ENCODE measurements at regions of chr15 and their contacts with region 1.

Region 1: GRCh38 chr15:80934761-80935221 is 54.8 kb downstream of the MESD start:
- DNase-seq: no peak

Region 2: DNA sequence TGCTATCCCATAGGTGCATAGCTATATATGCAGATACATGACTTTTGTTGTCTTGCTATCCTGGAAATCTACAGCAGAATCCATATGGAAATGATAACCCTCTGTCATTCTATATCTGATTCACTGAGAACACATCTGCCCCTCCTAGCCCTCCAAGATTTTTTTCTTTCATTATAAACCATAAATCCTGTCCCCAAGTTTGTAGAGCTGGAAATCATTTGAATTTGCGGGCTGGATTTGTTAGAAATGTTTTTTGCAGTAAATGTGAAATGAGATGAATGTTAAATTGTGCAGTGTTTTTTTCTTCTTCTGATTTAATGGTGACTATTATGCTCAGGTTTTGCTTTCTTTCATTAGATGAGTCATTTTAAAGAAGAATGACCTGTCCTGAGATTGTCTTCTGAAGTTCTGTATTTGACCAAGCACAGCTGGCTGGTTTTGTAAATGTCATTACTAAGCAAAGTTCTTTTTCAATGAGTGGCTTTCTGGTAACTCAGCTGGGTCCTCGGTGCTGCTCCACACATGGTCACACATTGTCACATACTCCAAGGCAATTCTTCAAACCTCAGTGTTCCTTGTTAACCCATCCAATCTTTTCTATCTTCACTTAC is 265.0 kb before region 1 on chr15:
- intact Hi-C with region 1: loop called (anchors 10 kb)
- DNase-seq: no peak

Region 3: GRCh38 chr15:80898040-80898439 is 36.8 kb before region 1 on chr15:
- intact Hi-C with region 1: loop called (anchors 5 kb)
- DNase-seq: no peak

Region 4: GRCh38 chr15:81073801-81074200 is 139.0 kb after region 1 on chr15:
- intact Hi-C with region 1: no loop called
- DNase-seq: no peak